IMR-90 (cell line): ENCODE measurements at regions of chr10 and their contacts with region 1.

Region 1: GRCh38 chr10:26780793-26781601 is 79.8 kb downstream of the ABI1 start:
- DNase-seq: peak; percentile 95
- ATAC-seq: peak; percentile 87
- H3K4me3 ChIP-seq: no peak overlapping the region
- H3K27ac ChIP-seq: peak overlapping the region; percentile 14; the same call in 1 of the 2 replicates
- H3K4me1 ChIP-seq: peaks cover 8% of the 10 kb centered on the region
- H3K27me3 ChIP-seq: no peaks in the 10 kb centered on the region
- CTCF ChIP-seq: no peak
- POLR2A ChIP-seq: no peak
- RAD21 ChIP-seq: no peak

Region 2: DNA sequence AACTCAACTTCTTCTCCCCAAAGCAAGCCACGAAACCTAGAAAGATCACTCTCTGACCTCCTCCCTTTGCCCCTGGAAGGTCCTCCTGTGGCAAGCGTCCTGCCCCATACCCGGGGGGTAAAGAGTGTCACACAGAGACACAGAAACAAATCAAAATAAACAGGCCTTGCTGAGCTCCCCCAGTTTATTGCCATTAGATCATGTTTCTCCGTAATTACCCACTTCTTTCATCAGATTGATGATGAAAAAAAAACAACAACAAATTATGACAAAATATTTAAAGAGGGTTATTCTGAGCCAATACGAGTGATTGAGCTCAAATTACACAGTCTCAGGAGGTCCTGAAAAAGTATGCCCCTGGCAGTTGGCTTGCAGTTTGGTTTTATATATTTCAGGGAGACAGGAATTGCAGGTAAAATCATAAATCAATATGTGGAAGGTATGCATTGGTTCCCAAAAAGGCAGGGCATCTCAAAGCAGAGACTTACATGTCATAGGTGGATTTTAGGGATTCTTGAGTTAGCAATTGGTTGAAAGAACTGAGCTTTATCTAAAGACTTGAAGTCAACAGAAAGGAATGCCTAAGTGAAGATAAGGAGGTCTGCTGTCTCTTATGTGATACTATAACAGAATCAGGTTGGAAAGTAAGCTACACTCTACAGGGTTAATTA is 256.7 kb before region 1 on chr10:
- CTCF ChIA-PET with region 1: no interaction called
- POLR2A ChIA-PET with region 1: no interaction called
- dilution Hi-C with region 1: no loop called
- in situ Hi-C with region 1: no loop called
- intact Hi-C with region 1: no loop called
- DNase-seq: no peak
- ATAC-seq: no peak
- H3K4me3 ChIP-seq: no peak overlapping the region
- H3K27ac ChIP-seq: no peak overlapping the region
- H3K4me1 ChIP-seq: no peaks in the 10 kb centered on the region
- H3K27me3 ChIP-seq: no peaks in the 10 kb centered on the region
- CTCF ChIP-seq: no peak
- POLR2A ChIP-seq: no peak
- RAD21 ChIP-seq: no peak

Region 3: DNA sequence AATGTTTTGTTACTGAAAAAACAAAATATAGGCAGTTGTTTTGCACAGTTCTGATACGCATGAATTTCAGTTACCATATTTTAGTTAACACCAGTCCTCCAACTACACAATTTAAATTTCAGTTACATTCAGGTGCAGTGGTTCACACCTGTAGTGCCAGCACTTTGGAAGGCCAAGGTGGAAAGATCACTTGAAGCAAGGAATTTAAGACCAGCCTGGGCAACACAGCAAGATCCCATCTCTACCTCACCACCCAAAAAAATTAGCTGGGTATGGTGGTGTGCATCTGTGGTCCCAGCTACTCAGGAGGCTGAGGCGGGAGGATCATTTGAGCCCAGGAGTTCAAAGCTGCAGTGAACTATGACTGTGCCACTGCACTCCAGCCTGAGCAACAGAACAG is 34.5 kb after region 1 on chr10:
- CTCF ChIA-PET with region 1: interaction called, 3 read pairs
- POLR2A ChIA-PET with region 1: no interaction called
- dilution Hi-C with region 1: no loop called
- in situ Hi-C with region 1: no loop called
- intact Hi-C with region 1: loop called (anchors 5 kb)
- DNase-seq: no peak
- ATAC-seq: no peak
- H3K4me3 ChIP-seq: no peak overlapping the region
- H3K27ac ChIP-seq: no peak overlapping the region
- H3K4me1 ChIP-seq: peaks cover 2% of the 10 kb centered on the region
- H3K27me3 ChIP-seq: no peaks in the 10 kb centered on the region
- CTCF ChIP-seq: no peak
- POLR2A ChIP-seq: no peak
- RAD21 ChIP-seq: no peak